H1 (cell line): ENCODE measurements at regions of chr10 and their contacts with region 1.

Region 1: DNA sequence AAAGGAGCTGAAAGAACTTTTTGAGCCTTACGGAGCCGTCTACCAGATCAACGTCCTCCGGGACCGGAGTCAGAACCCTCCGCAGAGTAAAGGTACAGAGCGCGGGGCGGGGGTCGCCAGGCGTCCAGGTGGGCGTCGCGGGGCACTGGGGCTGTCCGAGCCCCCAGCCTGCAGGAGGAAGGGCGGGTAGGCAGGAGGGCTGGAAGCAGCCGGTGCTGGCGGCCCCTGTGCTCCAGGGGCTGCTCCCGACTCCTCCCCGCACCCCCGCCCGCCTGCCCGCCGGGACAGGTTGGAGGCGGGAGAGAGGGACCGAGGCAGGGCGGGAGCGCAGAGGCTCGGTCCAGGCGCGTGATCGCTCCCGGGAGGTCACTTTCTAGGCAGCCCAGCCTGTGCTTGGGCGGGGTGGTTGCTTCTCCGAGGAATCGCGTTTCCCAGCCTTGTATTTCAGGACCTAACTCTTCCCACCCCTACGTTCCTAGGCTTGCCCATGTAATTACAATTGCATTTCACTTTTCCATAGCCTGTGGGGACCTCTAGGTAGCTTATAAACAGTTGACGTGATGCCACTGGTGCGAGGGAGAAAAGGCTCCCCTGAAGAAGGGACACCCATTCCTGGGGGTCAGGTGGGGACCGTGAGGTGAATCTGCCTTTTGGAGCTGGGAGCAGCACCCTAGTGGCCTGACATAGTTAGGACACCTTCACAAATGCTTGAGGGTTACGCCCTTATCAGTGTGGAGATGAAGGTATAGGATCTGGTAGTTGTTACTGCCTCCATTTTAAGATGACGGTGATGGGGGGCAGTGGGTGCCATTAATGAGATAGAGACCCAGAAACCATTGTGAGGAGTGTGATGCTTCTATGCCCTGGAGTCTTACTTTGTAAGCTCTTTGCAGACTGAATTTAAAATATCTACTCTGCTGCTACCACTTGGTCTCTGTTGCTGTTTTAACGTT is 148.2 kb downstream of the CELF2 start:
- DNase-seq: no peak
- H3K4me3 ChIP-seq: peak overlapping the region; percentile 54 to 96 (median 69)
- H3K27ac ChIP-seq: no peak overlapping the region
- H3K4me1 ChIP-seq: peaks cover 3 to 15% (median 8%) of the 10 kb centered on the region in 4 experiments; a peak in 6 of 7 replicates
- H3K27me3 ChIP-seq: peaks cover 0 to 1% (median 0%) of the 10 kb centered on the region in 4 experiments; a peak in 2 of 7 replicates
- CTCF ChIP-seq: peak; percentile 53 to 78 (median 61); a peak in 3 of 4 replicates
- EP300 ChIP-seq: no peak
- POLR2A ChIP-seq: 0 out of 3 replicates have a peak, but pooled peaks of 1 of the 2 experiments have one; percentile 18
- RAD21 ChIP-seq: peak; percentile 43 to 57

Region 2: GRCh38 chr10:11270135-11270857 is 104.4 kb after region 1 on chr10:
- CTCF ChIA-PET with region 1: interaction called, 15 read pairs
- POLR2A ChIA-PET with region 1: no interaction called
- DNase-seq: peak; percentile 86 to 95
- H3K4me3 ChIP-seq: no peak overlapping the region
- H3K27ac ChIP-seq: no peak overlapping the region
- H3K4me1 ChIP-seq: peaks cover 0 to 5% (median 1%) of the 10 kb centered on the region in 4 experiments; a peak in 3 of 7 replicates
- H3K27me3 ChIP-seq: no peaks in the 10 kb centered on the region
- CTCF ChIP-seq: peak; percentile 95 to 99 (median 99)
- EP300 ChIP-seq: no peak
- POLR2A ChIP-seq: no peak
- RAD21 ChIP-seq: peak; percentile 98 to 99